Astrocyte of the cerebellum (primary cell): ENCODE measurements at regions of chr19 and their contacts with region 1.

Region 1: DNA sequence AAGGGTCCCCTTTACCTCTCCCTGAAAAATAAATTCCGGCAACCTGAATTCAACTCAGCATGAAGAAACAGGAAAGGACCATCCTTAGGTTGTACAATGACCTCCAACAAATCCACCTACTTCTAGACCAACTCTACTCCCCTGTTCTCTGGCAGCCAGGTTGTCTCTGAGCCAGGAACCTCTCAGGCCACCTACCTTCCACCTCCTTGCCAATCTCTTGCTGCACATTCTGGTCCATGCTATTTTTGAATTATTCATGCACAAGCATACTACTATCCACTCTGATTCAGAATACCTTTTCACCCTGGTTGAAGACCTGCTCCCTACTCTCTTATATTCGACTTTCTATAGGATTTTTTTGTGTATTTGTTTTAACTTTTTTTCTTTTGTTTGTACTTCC is 415.0 kb upstream of the ZNF507 start:
- DNase-seq: no peak
- H3K4me3 ChIP-seq: no peak overlapping the region
- CTCF ChIP-seq: no peak

Region 2: GRCh38 chr19:31761281-31761913 is 169.0 kb before region 1 on chr19:
- in situ Hi-C with region 1: no loop called
- DNase-seq: no peak
- H3K4me3 ChIP-seq: no peak overlapping the region
- CTCF ChIP-seq: no peak

Region 3: DNA sequence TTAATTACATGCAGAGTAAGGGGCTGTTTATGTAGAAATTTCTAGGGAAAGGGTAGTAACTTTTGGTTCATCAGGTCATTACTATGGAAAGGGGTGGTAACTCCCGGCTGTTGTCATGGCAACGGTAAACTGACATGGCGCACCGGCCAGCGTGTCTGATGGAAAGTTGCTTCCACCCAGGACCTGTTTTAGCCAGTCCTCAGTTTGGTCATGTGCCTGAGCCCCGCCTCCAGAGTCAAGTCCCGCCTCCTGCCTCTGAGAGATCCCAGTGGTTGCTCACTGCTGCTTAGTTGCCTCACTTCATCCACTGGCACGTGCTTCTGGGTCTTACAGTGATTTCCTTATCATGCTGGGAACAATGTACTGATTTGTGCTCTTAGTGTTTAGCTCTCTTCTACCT is 40.2 kb before region 1 on chr19:
- in situ Hi-C with region 1: loop called (anchors 5 kb)
- DNase-seq: no peak
- H3K4me3 ChIP-seq: no peak overlapping the region
- CTCF ChIP-seq: no peak